ENCODE measurements at regions of chr9 and their contacts with region 1.

Region 1: GRCh38 chr9:3525836-3526164 is at the start of gene RFX3:
- DNase-seq: peak; percentile 97
- ATAC-seq: peak; percentile 86
- H3K4me3 ChIP-seq: peak within 1 kb of the TSS; percentile 97
- H3K27ac ChIP-seq: peak within 1 kb of the TSS; percentile 99
- H3K4me1 ChIP-seq: no peaks in the 10 kb centered on the region; the same call in 1 of the 2 replicates
- H3K27me3 ChIP-seq: no peaks in the 10 kb centered on the region
- CTCF ChIP-seq: peak; percentile 15; the same call in 1 of the 2 replicates
- POLR2A ChIP-seq: no peak
- RAD21 ChIP-seq: no peak
- total RNA-seq, gene RFX3: 2.5 and 2.7 TPM in 2 replicates

Region 2: DNA sequence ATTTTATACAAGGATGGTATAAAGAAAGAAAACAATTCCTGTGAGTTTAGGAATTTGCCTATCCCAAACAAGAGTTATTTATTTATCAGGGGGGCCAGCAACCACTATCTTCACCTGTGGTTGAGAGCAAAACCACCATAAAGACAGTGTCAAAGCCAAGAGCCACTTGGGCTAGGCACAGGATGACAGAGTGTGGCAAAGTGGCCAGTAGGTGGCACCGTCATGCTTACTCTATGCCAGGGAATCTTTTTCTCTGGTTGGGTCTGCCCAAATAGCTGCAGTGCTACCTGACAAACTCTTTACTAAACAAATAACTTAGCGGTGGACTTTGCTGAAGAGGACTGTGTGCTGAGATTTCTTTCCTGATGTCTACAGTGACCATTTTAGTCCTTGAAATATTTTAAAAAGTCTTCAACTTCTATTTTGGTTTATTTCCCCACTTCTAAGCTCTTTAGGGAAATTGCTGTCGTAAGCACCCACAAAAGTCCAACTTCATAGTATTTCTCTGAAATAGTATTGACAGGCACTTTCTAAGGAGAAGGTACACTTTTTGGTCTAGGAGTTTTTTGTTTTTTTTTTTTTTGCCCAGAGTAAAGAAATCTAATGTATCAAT is 285.0 kb before region 1 on chr9:
- CTCF ChIA-PET with region 1: no interaction called
- POLR2A ChIA-PET with region 1: no interaction called
- dilution Hi-C with region 1: no loop called
- in situ Hi-C with region 1: no loop called
- intact Hi-C with region 1: loop called (anchors 5 kb)
- DNase-seq: peak; percentile 63
- ATAC-seq: peak; percentile 90
- H3K4me3 ChIP-seq: no peak overlapping the region
- H3K27ac ChIP-seq: no peak overlapping the region
- H3K4me1 ChIP-seq: peaks cover 3% of the 10 kb centered on the region; the same call in 1 of the 2 replicates
- H3K27me3 ChIP-seq: no peaks in the 10 kb centered on the region
- CTCF ChIP-seq: peak; percentile 78
- POLR2A ChIP-seq: no peak
- RAD21 ChIP-seq: peak; percentile 83

Region 3: GRCh38 chr9:3385871-3386270 is 139.9 kb before region 1 on chr9:
- CTCF ChIA-PET with region 1: no interaction called
- POLR2A ChIA-PET with region 1: no interaction called
- dilution Hi-C with region 1: no loop called
- in situ Hi-C with region 1: no loop called
- intact Hi-C with region 1: no loop called
- DNase-seq: no peak
- ATAC-seq: no peak
- H3K4me3 ChIP-seq: no peak overlapping the region
- H3K27ac ChIP-seq: no peak overlapping the region
- H3K4me1 ChIP-seq: no peaks in the 10 kb centered on the region
- H3K27me3 ChIP-seq: no peaks in the 10 kb centered on the region
- CTCF ChIP-seq: no peak
- POLR2A ChIP-seq: no peak
- RAD21 ChIP-seq: no peak

Region 4: GRCh38 chr9:3467593-3468219 is 58.1 kb before region 1 on chr9:
- CTCF ChIA-PET with region 1: no interaction called
- POLR2A ChIA-PET with region 1: no interaction called
- dilution Hi-C with region 1: no loop called
- in situ Hi-C with region 1: no loop called
- intact Hi-C with region 1: loop called (anchors 5 kb)
- DNase-seq: peak; percentile 72
- ATAC-seq: peak; percentile 100
- H3K4me3 ChIP-seq: no peak overlapping the region
- H3K27ac ChIP-seq: no peak overlapping the region
- H3K4me1 ChIP-seq: no peaks in the 10 kb centered on the region
- H3K27me3 ChIP-seq: no peaks in the 10 kb centered on the region
- CTCF ChIP-seq: peak; percentile 91
- POLR2A ChIP-seq: peak; percentile 54; the same call in 1 of the 2 replicates
- RAD21 ChIP-seq: peak; percentile 95

Region 5: GRCh38 chr9:3578786-3579185 is 53.0 kb after region 1 on chr9:
- CTCF ChIA-PET with region 1: no interaction called
- POLR2A ChIA-PET with region 1: no interaction called
- dilution Hi-C with region 1: no loop called
- in situ Hi-C with region 1: no loop called
- intact Hi-C with region 1: no loop called
- DNase-seq: peak; percentile 72
- ATAC-seq: peak; percentile 81
- H3K4me3 ChIP-seq: no peak overlapping the region
- H3K27ac ChIP-seq: no peak overlapping the region
- H3K4me1 ChIP-seq: no peaks in the 10 kb centered on the region
- H3K27me3 ChIP-seq: no peaks in the 10 kb centered on the region
- CTCF ChIP-seq: no peak
- POLR2A ChIP-seq: no peak
- RAD21 ChIP-seq: no peak

Region 6: DNA sequence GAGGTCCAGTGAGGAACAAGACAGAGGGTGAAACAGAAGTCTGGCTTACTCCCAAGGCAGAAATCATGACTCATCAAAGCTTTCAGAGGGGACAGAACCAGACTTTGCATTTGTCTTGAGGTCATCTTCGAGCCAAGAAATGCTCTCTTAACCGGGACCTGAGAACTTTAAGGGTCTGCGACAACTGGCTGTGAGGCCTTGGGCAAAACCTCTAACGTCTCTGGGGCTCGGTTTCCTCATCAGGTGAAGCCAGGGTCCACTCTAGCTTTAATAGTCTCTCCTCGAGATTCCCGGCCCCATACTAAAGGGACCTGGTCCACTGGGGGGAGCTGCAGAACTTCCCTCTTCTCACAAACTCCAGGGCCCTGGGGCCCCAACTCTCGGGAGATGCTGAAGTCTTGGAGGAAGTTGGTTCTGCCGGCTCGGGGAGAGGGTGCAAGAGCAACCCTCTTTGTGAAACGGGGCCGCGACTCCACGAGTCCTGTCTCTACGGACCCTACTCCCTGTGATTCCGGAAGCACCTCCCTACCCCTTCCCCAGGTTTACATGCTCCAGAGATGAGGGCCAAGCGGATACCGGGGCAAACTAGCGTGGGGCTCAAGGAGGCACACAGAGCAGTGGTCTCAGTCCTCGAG is 771.5 kb after region 1 on chr9:
- CTCF ChIA-PET with region 1: no interaction called
- POLR2A ChIA-PET with region 1: no interaction called
- dilution Hi-C with region 1: no loop called
- in situ Hi-C with region 1: no loop called
- intact Hi-C with region 1: loop called (anchors 1 kb)
- DNase-seq: peak; percentile 87
- ATAC-seq: peak; percentile 22
- H3K4me3 ChIP-seq: peak overlapping the region; percentile 74
- H3K27ac ChIP-seq: peak overlapping the region; percentile 99
- H3K4me1 ChIP-seq: peaks cover 15% of the 10 kb centered on the region
- H3K27me3 ChIP-seq: no peaks in the 10 kb centered on the region
- CTCF ChIP-seq: peak; percentile 55
- POLR2A ChIP-seq: no peak; the same call in 1 of the 2 replicates
- RAD21 ChIP-seq: peak; percentile 37; the same call in 1 of the 2 replicates

Measured in IMR-90 (cell line).